ENCODE measurements at regions of chr19 and their contacts with region 1.

Region 1: DNA sequence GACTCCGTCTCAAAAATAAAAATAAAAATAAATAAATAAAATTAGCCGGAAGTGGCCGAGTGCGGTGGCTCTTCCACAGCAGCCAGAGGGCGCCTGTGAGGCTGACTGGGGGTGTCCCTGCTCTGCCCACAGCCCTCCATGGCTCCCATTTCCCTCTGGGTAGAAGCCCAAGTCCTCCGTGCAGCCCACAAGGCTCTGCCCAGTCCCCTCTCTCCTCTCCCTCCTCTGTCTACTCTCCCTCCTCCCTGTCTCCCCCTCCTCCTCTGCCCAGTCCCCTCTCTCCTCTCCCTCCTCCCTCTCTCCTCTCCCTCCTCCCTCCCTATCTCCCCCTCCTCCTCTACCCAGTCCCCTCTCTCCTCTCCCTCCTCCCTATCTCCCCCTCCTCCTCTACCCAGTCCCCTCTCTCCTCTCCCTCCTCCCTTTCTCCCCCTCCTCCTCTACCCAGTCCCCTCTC is 20.4 kb downstream of the MISP start:
- DNase-seq: peak; percentile 28
- H3K4me3 ChIP-seq: no peak overlapping the region
- H3K27ac ChIP-seq: no peak overlapping the region
- H3K4me1 ChIP-seq: no peaks in the 10 kb centered on the region
- H3K27me3 ChIP-seq: no peaks in the 10 kb centered on the region
- CTCF ChIP-seq: peak; percentile 47 to 66

Region 2: DNA sequence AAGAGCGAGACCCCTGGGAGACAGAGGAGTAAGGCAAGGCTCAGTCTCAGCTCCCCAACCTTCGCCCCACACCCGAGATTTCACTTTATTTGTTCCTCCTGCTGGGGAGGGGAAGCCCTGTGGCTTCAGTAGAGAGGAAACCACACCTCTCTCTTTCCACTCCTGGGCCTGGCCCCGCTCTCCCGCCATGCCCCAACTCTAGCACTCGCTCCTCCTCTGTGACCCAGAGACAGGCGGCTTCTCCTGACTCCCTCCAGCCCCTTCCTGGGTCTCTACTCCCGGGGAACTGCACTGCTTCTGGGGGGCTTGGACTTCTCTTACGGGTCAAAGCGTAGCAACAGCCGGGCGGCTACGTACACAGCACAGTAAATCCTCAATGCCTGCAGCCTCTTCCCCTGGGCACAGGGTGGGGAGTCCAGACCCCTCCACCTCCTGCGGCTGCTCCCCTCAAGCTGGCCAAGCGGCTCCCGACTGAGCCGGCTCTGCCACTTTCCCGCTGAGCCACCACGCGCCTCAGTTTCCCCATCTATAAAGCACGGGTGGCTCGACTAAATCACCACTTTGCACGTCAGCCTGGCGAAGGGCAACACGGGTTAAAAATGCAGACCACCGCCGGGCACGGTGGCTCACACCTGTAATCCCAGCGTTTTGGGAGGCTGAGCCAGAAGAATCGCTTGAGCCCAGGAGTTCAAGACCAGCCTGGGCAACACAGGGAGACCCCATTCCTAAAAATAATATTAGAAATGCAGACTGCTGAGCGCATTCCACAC is 109.7 kb before region 1 on chr19:
- CTCF ChIA-PET with region 1: no interaction called
- dilution Hi-C with region 1: no loop called
- in situ Hi-C with region 1: no loop called
- intact Hi-C with region 1: no loop called
- DNase-seq: peak; percentile 46
- H3K4me3 ChIP-seq: peak overlapping the region; percentile 63 to 90 (median 71)
- H3K27ac ChIP-seq: peak overlapping the region; percentile 71
- H3K4me1 ChIP-seq: peaks cover 50% of the 10 kb centered on the region
- H3K27me3 ChIP-seq: no peaks in the 10 kb centered on the region
- CTCF ChIP-seq: no peak

Region 3: DNA sequence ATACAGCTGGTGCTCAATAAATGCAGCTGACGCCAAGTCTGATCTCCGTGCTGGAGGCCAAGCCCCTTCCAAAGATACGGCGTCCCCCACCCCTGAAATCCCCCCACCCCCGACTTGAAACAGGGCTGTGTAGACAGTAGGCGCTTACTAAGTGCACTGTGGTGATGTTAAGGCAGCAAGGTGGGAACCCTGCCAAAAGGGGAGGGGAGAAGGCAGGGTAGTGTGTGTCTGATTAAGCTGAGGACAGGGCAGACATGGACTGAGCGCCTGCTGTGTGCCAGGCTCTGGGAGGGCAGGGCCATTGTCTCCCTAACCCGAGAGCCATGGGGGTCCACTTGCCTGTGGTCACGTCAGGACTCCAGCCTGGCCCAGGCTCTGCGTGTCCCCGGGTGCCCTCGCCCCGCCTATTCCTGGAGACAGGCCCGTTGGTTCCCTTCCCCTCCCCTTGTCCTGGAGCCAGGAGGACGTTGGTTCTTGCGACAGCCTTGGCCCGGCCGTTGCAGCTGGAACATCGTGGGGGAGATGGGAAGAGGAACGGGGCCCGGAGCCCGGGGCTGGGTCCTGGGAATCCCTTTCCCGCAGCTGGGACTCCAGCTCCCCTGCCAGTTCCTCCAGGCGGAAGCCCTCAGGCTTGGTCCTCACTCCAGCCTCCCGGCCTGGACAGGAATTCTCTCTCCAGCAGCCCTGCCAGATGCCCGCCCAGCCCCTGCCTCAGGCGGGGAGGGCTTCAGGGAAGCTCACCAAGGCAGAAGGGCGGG is 79.0 kb after region 1 on chr19:
- CTCF ChIA-PET with region 1: no interaction called
- dilution Hi-C with region 1: no loop called
- in situ Hi-C with region 1: loop called in 1 of 2 experiments (anchors 10 kb)
- intact Hi-C with region 1: no loop called
- DNase-seq: no peak
- H3K4me3 ChIP-seq: no peak overlapping the region
- H3K27ac ChIP-seq: no peak overlapping the region
- H3K4me1 ChIP-seq: peaks cover 7% of the 10 kb centered on the region
- H3K27me3 ChIP-seq: peaks cover 13% of the 10 kb centered on the region
- CTCF ChIP-seq: no peak

Region 4: GRCh38 chr19:872266-872951 is 101.0 kb after region 1 on chr19:
- CTCF ChIA-PET with region 1: no interaction called
- dilution Hi-C with region 1: no loop called
- in situ Hi-C with region 1: no loop called
- intact Hi-C with region 1: no loop called
- DNase-seq: peak; percentile 21
- H3K4me3 ChIP-seq: no peak overlapping the region
- H3K27ac ChIP-seq: no peak overlapping the region
- H3K4me1 ChIP-seq: no peaks in the 10 kb centered on the region
- H3K27me3 ChIP-seq: no peaks in the 10 kb centered on the region
- CTCF ChIP-seq: no peak

Region 5: DNA sequence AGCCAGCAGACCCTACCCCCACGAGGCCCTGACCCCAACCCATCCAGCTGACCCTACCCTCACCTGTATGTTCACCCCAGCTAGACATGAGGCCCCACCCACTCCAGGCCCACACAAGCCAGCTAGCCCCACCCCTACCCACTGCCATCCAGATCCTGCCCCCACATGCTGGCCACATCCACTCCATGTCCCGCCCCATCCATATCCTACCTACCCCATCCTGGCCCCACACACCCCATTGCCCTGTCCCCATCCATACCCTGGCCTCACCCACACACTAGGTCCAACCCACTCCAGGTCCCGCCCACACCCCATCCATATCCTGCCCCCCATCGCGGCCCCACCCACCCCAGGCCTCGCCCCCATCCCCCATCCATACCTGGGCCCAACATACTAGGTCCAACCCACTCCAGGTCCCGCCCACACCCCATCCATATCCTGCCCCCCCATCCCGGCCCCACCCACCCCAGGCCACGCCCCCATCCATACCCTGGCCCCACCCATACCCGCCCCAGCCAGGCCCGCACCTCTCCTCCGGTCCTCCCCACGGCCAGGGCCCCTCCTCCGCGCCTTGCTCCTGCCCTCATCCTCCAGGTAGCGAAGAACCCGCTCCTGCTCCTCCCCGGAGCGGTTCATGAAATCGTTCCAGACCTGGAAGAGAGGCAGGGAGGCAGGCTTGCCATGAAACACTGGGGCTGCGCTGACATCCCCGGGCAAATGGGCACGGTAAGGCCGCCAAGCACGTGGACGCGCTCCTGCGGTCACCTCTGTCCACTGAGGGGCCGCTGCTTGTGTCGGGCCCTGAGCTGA is 129.1 kb after region 1 on chr19:
- CTCF ChIA-PET with region 1: no interaction called
- dilution Hi-C with region 1: loop called (anchors 10 kb)
- in situ Hi-C with region 1: no loop called
- intact Hi-C with region 1: no loop called
- DNase-seq: no peak
- H3K4me3 ChIP-seq: no peak overlapping the region
- H3K27ac ChIP-seq: no peak overlapping the region
- H3K4me1 ChIP-seq: no peaks in the 10 kb centered on the region
- H3K27me3 ChIP-seq: no peaks in the 10 kb centered on the region
- CTCF ChIP-seq: no peak

Region 6: GRCh38 chr19:984165-984967 is 213.0 kb after region 1 on chr19 and contains the start of gene WDR18:
- CTCF ChIA-PET with region 1: no interaction called
- dilution Hi-C with region 1: no loop called
- in situ Hi-C with region 1: loop called (anchors 10 kb)
- intact Hi-C with region 1: loop called (anchors 1 kb)
- DNase-seq: peak; percentile 83
- H3K4me3 ChIP-seq: peak within 1 kb of the TSS; percentile 79 to 99 (median 99)
- H3K27ac ChIP-seq: peak within 1 kb of the TSS; percentile 81
- H3K4me1 ChIP-seq: peaks cover 15% of the 10 kb centered on the region
- H3K27me3 ChIP-seq: no peaks in the 10 kb centered on the region
- CTCF ChIP-seq: peak in 1 of 2 donors; percentile 21
- total RNA-seq, gene WDR18: 42.0 to 84.1 TPM

Region 7: GRCh38 chr19:1183534-1184172 is 412.3 kb after region 1 on chr19:
- CTCF ChIA-PET with region 1: interaction called, 10 read pairs
- dilution Hi-C with region 1: no loop called
- in situ Hi-C with region 1: no loop called
- intact Hi-C with region 1: no loop called
- DNase-seq: peak; percentile 92
- H3K4me3 ChIP-seq: no peak overlapping the region
- H3K27ac ChIP-seq: peak overlapping the region; percentile 63
- H3K4me1 ChIP-seq: peaks cover 39% of the 10 kb centered on the region
- H3K27me3 ChIP-seq: no peaks in the 10 kb centered on the region
- CTCF ChIP-seq: no peak

Measured in mammary epithelial cell (primary cell).